Heart left ventricle (tissue), 16 donors: ENCODE measurements at regions of chr11 and their contacts with region 1.

Region 1: GRCh38 chr11:10322830-10323792 is 18.2 kb downstream of the ADM start:
- DNase-seq: peak in 2 of 5 donors; percentile 30 to 43
- ATAC-seq: peak; percentile 34 to 50 (median 38)
- H3K4me3 ChIP-seq: no peak overlapping the region
- H3K27ac ChIP-seq: peak overlapping the region in 4 of 12 donors; percentile 15 to 50 (median 24)
- H3K4me1 ChIP-seq: peaks cover 0 to 50% (median 26%) of the 10 kb centered on the region in 12 donors
- H3K27me3 ChIP-seq: no peaks in the 10 kb centered on the region
- CTCF ChIP-seq: peak; percentile 31 to 70 (median 55)
- POLR2A ChIP-seq: no peak

Region 2: DNA sequence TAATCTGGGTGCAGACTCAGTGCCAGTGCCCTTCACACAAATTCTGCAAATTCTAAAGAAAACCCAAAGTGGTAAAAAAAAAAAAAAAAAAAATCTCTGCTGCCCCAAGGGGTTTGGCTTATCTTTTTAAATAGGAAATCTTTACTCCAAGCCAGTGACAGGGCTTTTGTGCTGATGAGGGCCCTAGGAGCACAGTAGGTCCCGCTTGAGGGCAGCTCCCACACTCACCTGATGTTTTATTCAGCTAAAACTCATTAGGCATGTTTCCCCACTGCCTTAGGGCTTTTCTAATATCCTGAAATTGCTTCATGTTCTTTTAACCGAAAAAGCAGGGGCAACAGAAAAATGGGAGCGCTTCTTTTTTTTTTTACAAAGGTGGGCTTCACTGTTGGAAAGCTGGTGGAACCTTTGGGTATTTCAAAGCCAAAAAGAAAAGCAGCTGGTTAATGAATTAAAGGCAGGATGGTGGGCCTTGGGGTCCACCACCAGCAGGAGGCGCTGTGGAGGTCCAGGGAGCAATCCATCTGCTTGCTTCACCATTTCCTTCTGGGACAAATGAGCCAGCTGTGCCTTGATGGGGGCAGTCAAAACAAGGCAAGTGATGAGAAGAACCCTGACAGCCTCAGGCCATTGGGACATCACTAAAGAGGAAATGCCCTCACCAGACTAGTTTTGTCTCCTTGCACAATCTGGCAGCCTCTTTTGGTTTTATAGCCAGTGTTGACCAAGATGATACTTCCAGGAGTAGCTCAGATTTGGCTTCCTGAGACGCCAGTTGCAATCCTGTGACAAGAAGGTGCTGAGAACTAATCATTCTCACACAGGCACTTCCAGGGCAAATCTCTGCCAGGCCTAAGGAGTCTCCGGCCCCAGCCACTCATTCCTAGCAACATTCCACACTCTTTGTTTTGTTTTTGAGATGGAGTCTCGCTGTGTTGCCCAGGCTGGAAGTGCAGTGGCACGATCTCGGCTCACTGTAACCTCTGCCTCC is 788.0 kb before region 1 on chr11:
- intact Hi-C with region 1: loop called in 1 of 10 experiments (anchors 10 kb)
- DNase-seq: peak; percentile 62 to 88 (median 75)
- ATAC-seq: peak; percentile 49 to 87 (median 80)
- H3K4me3 ChIP-seq: no peak overlapping the region
- H3K27ac ChIP-seq: no peak overlapping the region
- H3K4me1 ChIP-seq: peaks cover 0 to 12% (median 2%) of the 10 kb centered on the region in 12 donors
- H3K27me3 ChIP-seq: no peaks in the 10 kb centered on the region
- CTCF ChIP-seq: peak; percentile 59 to 88 (median 74)
- POLR2A ChIP-seq: no peak

Region 3: GRCh38 chr11:9861860-9862725 is 461.0 kb before region 1 on chr11:
- intact Hi-C with region 1: loop called in 9 of 10 experiments (anchors 5 kb)
- DNase-seq: peak in 4 of 5 donors; percentile 31 to 48 (median 38)
- ATAC-seq: peak in 3 of 4 donors; percentile 82 to 85 (median 84)
- H3K4me3 ChIP-seq: no peak overlapping the region
- H3K27ac ChIP-seq: no peak overlapping the region
- H3K4me1 ChIP-seq: peaks cover 0 to 17% (median 5%) of the 10 kb centered on the region in 12 donors
- H3K27me3 ChIP-seq: no peaks in the 10 kb centered on the region
- CTCF ChIP-seq: peak; percentile 54 to 79 (median 64)
- POLR2A ChIP-seq: no peak

Region 4: GRCh38 chr11:9982800-9983579 is 340.1 kb before region 1 on chr11:
- intact Hi-C with region 1: loop called in 1 of 10 experiments (anchors 5 kb)
- DNase-seq: no peak
- ATAC-seq: no peak
- H3K4me3 ChIP-seq: no peak overlapping the region
- H3K27ac ChIP-seq: no peak overlapping the region
- H3K4me1 ChIP-seq: peaks cover 0 to 6% (median 2%) of the 10 kb centered on the region in 12 donors
- H3K27me3 ChIP-seq: no peaks in the 10 kb centered on the region
- CTCF ChIP-seq: no peak
- POLR2A ChIP-seq: no peak

Region 5: GRCh38 chr11:10293423-10294289 is 29.5 kb before region 1 on chr11 and contains the start of gene SBF2:
- intact Hi-C with region 1: loop called in 1 of 10 experiments (anchors 2 kb)
- DNase-seq: peak; percentile 87 to 95 (median 89)
- ATAC-seq: peak; percentile 90 to 96 (median 92)
- H3K4me3 ChIP-seq: peak within 1 kb of the TSS; percentile 74 to 98 (median 96)
- H3K27ac ChIP-seq: peak within 1 kb of the TSS; percentile 90 to 99 (median 97)
- H3K4me1 ChIP-seq: peaks cover 0 to 62% (median 16%) of the 10 kb centered on the region in 12 donors
- H3K27me3 ChIP-seq: no peaks in the 10 kb centered on the region
- CTCF ChIP-seq: no peak
- POLR2A ChIP-seq: peak in 1 of 2 donors; percentile 62
- total RNA-seq, gene SBF2: 15.3 to 33.9 (median 21.5) TPM

Region 6: DNA sequence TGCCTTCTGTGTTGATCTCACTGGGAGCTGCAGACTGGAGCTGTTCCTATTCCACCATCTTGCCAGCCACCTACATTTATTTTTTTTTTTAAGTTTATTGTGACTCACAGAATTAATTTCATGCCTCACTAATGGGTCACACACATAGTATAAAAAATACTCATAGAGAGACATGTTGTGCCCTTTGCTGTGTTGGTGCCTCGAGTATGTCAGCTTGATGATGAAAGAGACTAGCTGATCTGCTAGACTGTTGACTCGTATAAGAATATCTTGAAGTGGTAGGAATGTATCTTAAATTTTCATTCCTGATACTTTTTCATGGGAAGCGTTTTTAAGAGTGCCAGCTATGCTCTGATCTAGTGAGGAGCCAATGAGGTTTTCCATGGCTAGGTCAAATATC is 103.4 kb after region 1 on chr11:
- intact Hi-C with region 1: no loop called
- DNase-seq: no peak
- ATAC-seq: no peak
- H3K4me3 ChIP-seq: no peak overlapping the region
- H3K27ac ChIP-seq: no peak overlapping the region
- H3K4me1 ChIP-seq: no peaks in the 10 kb centered on the region
- H3K27me3 ChIP-seq: peaks cover 0 to 23% (median 0%) of the 10 kb centered on the region in 9 donors
- CTCF ChIP-seq: no peak
- POLR2A ChIP-seq: no peak